H1 (cell line): ENCODE measurements at regions of chr20 and their contacts with region 1.

Region 1: DNA sequence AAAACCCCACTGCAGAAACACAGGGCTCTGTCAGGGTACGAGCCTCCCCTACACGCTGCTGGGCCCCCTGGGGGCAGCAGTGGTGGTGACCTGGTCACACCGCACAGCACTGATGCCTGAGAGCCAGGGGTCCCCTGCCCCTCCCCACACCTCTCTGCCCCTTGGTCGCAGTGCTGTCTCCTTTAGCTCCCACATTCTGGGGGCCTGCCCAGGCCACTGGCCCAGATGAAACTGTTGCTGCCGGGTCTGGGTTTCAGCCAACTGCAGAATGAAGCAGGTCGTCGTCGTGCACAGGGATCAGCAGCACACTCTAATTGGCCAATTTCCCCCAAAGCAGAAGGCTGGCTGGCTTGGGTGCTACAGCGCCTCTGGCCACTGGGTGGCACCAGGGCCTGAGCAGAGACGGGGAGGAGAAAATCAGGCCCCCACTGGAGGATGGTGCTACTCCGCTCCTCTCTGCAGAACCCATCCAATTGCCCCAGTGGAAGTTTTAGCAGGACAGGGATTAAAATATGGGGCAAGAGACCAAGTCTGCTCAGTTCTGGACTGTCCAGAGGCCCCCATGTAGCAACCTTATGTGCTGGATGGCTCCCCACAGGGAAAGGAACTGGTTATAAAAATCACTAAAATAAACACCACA is 26.1 kb downstream of the DIDO1 start:
- DNase-seq: peak; percentile 51 to 88
- H3K4me3 ChIP-seq: 0 out of 8 replicates have a peak overlapping the region, but pooled peaks of 1 of the 4 experiments have one; percentile 17
- H3K27ac ChIP-seq: peak overlapping the region; percentile 55
- H3K4me1 ChIP-seq: peaks cover 9 to 18% (median 15%) of the 10 kb centered on the region in 4 experiments
- H3K27me3 ChIP-seq: no peaks in the 10 kb centered on the region
- CTCF ChIP-seq: peak; percentile 93 to 96 (median 95)
- EP300 ChIP-seq: no peak
- POLR2A ChIP-seq: peak; percentile 30 to 78; a peak in 2 of 3 replicates
- RAD21 ChIP-seq: peak; percentile 67 to 78

Region 2: GRCh38 chr20:62832212-62832922 is 67.8 kb before region 1 on chr20:
- CTCF ChIA-PET with region 1: no interaction called
- POLR2A ChIA-PET with region 1: no interaction called
- DNase-seq: no peak
- H3K4me3 ChIP-seq: no peak overlapping the region
- H3K27ac ChIP-seq: no peak overlapping the region
- H3K4me1 ChIP-seq: peaks cover 0 to 10% (median 0%) of the 10 kb centered on the region in 4 experiments; a peak in 2 of 7 replicates
- H3K27me3 ChIP-seq: no peaks in the 10 kb centered on the region
- CTCF ChIP-seq: no peak
- EP300 ChIP-seq: no peak
- POLR2A ChIP-seq: no peak
- RAD21 ChIP-seq: no peak

Region 3: DNA sequence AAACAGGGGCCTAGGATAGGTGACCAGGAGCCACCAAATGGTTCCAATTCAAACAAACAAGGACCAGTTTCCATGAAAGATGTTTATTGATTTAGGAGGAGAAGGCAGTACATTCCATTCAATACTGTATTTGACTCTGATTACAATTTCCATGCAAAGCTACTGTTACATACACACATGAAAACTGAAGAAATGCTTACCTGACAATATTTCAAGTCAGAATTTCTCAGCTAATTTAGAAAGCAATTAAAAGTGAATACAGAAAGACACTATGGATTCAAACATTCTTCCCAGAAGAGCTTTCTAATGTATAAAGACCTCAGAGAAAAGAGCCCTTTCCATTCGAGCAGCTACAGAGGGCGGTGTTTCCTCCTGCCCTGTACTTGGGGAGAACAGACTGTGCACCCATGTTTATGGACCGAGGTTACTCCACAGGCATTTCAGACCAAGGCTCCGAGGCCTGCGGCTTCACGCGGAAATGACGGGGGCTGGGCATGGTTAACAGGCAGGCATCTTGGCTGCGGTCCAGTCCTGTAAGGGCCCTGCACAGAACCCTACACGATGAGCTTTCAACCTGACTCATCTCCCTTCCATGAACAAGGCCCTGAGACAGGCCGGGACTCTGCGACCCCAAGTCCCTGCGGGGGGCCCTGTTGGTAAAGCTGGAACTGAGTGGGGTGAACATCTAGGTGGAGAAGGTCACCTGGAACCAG is 12.9 kb before region 1 on chr20:
- CTCF ChIA-PET with region 1: interaction called, 56 read pairs
- POLR2A ChIA-PET with region 1: interaction called, 88 read pairs
- DNase-seq: no peak
- H3K4me3 ChIP-seq: no peak overlapping the region
- H3K27ac ChIP-seq: no peak overlapping the region
- H3K4me1 ChIP-seq: peaks cover 0 to 19% (median 9%) of the 10 kb centered on the region in 4 experiments; a peak in 5 of 7 replicates
- H3K27me3 ChIP-seq: no peaks in the 10 kb centered on the region
- CTCF ChIP-seq: no peak
- EP300 ChIP-seq: no peak
- POLR2A ChIP-seq: no peak
- RAD21 ChIP-seq: no peak

Region 4: DNA sequence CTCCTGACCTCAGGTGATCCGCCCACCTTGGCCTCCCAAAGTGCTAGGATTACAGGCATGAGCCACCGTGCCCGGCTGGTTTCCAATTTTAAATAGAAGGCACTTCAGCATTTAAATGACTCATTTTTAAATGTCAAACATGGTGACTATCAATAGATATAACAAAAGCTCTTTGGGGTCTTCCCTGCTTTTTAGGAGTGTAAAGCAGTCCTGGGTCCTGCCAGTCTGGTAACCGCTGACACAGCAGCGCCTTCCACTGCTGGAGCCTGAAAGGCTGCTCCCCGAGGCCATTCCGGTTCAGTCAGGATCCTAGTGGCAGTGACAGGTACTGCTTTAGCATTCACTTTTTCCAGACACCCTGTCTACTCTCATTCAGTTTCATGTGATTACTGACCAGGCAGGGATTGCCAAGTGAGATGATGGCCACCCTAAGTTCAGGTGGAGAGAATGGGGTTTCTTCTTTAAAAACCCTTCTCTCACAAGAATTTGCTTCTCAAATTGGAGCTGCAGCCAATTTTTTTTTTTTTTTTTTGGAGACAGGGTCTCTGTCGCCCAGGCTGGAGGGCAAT is 21.0 kb after region 1 on chr20:
- CTCF ChIA-PET with region 1: interaction called, 35 read pairs
- POLR2A ChIA-PET with region 1: interaction called, 81 read pairs
- DNase-seq: no peak
- H3K4me3 ChIP-seq: no peak overlapping the region
- H3K27ac ChIP-seq: no peak overlapping the region
- H3K4me1 ChIP-seq: peaks cover 12 to 50% (median 41%) of the 10 kb centered on the region in 4 experiments; a peak in 6 of 7 replicates
- H3K27me3 ChIP-seq: no peaks in the 10 kb centered on the region
- CTCF ChIP-seq: peak; percentile 52 to 72 (median 71)
- EP300 ChIP-seq: no peak
- POLR2A ChIP-seq: no peak
- RAD21 ChIP-seq: peak; percentile 28 to 46; a peak in 2 of 4 replicates

Region 5: DNA sequence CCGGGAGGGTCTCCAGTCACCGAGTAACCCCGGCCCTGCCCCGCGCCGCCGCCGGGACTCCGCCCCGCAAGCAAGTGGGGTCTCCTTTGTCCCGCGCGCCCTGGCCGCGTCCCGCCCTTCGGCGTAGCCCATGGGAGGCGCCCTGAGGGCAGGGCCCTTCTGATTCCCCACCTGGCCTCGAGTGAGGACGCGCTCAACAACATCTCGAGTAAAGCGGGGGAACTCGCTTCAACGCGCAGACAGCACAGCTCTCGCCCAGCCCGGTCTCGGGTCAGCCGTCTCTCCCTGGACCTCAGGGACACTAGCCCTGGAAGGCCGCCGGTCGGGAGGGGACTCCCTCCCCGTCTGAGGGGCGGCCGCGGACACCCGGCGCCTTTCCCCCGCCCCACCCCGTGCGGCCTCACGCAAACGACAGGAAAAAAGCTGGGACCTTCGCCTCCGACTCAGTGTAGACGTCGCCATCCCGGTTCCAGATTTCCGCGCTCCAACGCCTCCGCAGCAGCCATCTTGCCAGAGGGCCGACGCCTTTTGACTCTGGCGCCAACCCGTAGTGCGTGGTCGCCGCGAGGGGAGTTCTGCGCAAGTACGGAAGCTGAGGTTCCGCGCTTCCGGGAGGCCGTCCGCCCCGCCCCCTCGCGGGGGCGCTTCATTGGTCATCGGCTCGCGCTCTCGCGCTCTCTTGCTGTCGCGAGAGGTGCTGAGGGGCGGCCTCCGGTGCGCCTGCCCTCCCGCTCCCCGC is 37.4 kb after region 1 on chr20:
- CTCF ChIA-PET with region 1: interaction called, 6 read pairs
- POLR2A ChIA-PET with region 1: interaction called, 45 read pairs
- DNase-seq: peak; percentile 91 to 96
- H3K4me3 ChIP-seq: peak overlapping the region; percentile 89 to 98 (median 94)
- H3K27ac ChIP-seq: peak overlapping the region; percentile 95
- H3K4me1 ChIP-seq: peaks cover 3 to 21% (median 11%) of the 10 kb centered on the region in 4 experiments
- H3K27me3 ChIP-seq: no peaks in the 10 kb centered on the region
- CTCF ChIP-seq: no peak
- EP300 ChIP-seq: no peak
- POLR2A ChIP-seq: peak; percentile 92 to 95; a peak in 2 of 3 replicates
- RAD21 ChIP-seq: no peak

Region 6: DNA sequence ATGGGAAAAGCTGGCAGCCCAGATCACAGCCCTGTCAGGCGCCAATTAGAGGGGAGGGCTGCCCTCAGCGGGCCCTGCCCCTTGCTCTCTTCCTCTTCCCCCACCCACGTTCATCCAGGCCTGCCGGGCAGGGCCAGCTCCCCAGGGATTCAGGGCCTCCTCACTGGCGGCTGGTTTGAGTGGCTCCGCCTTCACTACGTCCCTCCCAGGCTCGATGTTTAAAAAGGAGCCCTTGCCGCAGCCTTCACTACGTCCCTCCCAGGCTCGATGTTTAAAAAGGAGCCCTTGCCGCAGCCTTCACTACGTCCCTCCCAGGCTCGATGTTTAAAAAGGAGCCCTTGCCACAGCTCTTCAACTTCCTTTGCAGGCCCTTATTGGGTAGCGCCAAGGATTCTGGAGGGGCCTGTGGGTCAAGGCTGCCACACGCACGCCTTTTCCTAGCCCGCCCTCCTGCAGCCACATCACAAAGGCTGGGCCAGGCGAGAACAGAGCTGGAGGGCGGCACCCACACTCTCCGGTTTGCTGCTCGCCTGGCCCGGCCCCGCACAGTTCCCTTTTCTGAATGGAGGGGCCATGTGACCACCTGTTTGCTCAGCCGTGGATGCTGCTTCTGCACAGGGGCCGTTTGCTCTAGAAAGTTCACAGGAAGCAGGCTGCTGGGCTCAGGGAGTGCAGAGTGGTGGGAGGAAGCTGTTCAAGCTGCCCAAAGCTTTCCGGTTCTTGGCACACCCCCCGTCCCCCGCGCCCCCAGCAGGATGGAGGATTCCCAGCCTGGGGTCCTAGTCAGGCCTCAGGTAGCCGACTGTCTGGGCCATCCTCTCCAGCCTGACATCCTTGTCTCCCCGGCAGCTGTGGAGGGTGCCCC is 53.9 kb after region 1 on chr20:
- CTCF ChIA-PET with region 1: interaction called, 26 read pairs
- POLR2A ChIA-PET with region 1: interaction called, 14 read pairs
- DNase-seq: peak in 1 of 2 experiments; percentile 67
- H3K4me3 ChIP-seq: peak overlapping the region; percentile 1 to 61 (median 40); a peak in 6 of 8 replicates
- H3K27ac ChIP-seq: no peak overlapping the region
- H3K4me1 ChIP-seq: peaks cover 2 to 23% (median 17%) of the 10 kb centered on the region in 4 experiments
- H3K27me3 ChIP-seq: no peaks in the 10 kb centered on the region
- CTCF ChIP-seq: no peak
- EP300 ChIP-seq: no peak
- POLR2A ChIP-seq: no peak
- RAD21 ChIP-seq: no peak